PC-3 (cell line): ENCODE measurements at regions of chr2 and their contacts with region 1.

Region 1: DNA sequence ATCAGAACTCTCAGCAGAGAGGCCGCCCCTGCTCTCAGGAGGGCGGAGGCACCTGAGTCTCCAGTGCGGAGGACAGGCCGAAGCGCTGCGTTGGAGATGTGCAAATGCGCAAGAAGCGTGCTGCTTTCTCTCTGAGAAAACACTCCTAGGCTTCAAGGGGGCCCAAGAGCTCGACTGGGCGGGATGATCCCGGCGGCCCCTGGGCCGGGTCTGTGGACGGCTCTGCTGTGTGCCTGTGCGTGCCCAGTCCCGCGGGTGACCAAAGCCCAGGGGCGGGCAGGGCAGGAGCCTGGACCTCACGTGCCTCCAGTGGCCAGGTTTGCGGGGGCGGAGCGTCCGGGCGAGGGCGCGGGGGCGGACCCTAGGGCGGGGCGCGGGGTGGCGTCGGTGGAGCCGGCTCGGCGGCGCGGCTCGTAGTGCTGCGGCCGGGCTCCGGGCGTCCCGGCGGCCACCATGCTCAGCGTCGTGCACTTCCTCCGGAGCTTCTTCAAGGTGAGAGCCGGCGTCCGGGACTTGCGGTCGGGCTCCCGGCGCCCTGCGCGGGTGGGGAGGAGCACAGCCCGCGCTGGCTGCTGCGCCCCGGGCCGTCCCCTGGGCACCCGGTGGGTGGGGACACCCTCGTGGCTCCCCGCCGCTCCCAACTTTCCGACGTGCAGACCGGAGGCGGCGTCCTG is at the start of gene ARHGEF4:
- DNase-seq: peak; percentile 66
- ATAC-seq: peak; percentile 88
- H3K4me3 ChIP-seq: peak within 1 kb of the TSS; percentile 89
- H3K27ac ChIP-seq: peak within 1 kb of the TSS; percentile 41
- H3K4me1 ChIP-seq: peaks cover 16% of the 10 kb centered on the region
- H3K27me3 ChIP-seq: no peaks in the 10 kb centered on the region
- CTCF ChIP-seq: no peak
- total RNA-seq, gene ARHGEF4: 21.5 and 30.5 TPM in 2 replicates

Region 2: DNA sequence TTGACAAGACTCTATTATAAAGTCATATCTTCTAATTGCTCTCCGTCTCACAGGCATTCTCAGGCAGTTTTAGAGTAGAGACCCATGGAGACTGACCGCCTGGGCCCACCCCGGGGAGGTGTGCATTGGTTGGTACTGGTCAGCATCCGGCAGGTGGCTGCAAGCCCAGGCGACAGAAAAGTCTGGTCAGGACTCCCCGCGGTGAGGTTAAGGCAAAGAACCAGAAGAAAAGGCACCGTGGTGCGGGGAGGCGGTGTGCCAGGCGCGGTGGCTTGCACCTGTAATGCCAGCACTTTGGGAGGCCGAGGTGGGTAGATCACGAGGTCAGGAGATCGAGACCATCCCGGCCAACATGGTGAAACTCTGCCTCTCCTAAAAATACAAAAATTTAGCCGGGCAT is 48.8 kb before region 1 on chr2:
- CTCF ChIA-PET with region 1: no interaction called
- POLR2A ChIA-PET with region 1: no interaction called
- intact Hi-C with region 1: no loop called
- DNase-seq: no peak
- ATAC-seq: no peak
- H3K4me3 ChIP-seq: no peak overlapping the region
- H3K27ac ChIP-seq: no peak overlapping the region
- H3K4me1 ChIP-seq: no peaks in the 10 kb centered on the region
- H3K27me3 ChIP-seq: peaks cover 26% of the 10 kb centered on the region
- CTCF ChIP-seq: no peak

Region 3: GRCh38 chr2:130807659-130808385 is 28.8 kb before region 1 on chr2:
- CTCF ChIA-PET with region 1: interaction called, 4 read pairs
- POLR2A ChIA-PET with region 1: no interaction called
- intact Hi-C with region 1: loop called (anchors 2 kb)
- DNase-seq: peak; percentile 76
- ATAC-seq: peak; percentile 96
- H3K4me3 ChIP-seq: no peak overlapping the region
- H3K27ac ChIP-seq: peak overlapping the region; percentile 90
- H3K4me1 ChIP-seq: peaks cover 24% of the 10 kb centered on the region
- H3K27me3 ChIP-seq: no peaks in the 10 kb centered on the region
- CTCF ChIP-seq: no peak

Region 4: GRCh38 chr2:130899306-130899705 is 62.7 kb after region 1 on chr2:
- CTCF ChIA-PET with region 1: no interaction called
- POLR2A ChIA-PET with region 1: no interaction called
- intact Hi-C with region 1: no loop called
- DNase-seq: no peak
- ATAC-seq: no peak
- H3K4me3 ChIP-seq: no peak overlapping the region
- H3K27ac ChIP-seq: no peak overlapping the region
- H3K4me1 ChIP-seq: peaks cover 8% of the 10 kb centered on the region
- H3K27me3 ChIP-seq: no peaks in the 10 kb centered on the region
- CTCF ChIP-seq: no peak

Region 5: DNA sequence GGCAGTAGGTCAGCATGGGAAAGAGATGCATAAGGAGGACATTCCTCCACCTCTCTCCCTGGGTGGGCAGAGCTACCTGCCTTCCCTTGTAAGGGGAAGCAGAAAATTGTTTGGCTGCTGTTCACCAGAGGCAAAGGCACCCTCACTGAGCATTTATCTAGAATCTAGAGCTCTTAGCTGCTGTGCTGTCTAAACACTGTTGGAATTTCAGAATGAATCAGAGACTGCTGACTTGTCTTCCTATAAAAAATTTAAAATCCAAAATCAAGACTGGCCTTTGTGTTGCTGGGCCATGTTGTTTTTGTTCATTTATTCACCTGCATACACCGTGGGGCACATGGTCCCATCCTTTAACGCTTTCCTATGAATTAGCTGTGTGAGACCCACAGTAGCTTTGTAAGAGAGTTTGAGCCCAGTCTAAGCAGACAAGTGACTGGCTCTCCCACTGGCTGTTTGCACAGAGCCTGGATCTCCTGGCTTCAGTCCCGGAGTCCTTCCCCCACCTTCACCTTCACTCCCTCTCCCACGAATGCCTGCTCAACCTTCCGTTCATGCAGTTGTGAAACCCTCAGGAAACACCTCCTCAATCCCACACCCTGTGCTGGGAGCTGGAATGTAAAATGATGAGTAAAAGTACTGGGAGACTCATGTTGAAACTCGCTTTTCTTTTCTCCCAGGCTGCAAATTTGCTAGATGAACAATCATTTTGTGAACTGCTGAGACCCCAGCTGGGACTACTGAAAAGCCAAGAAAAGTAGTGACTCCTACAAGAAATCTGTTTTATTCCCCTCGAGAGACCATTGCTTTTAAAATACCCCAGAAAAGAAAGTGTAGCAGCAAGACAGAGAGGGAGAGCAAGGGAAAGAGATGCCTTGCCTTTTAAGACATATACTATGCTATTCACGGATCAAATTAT is 180.4 kb after region 1 on chr2:
- CTCF ChIA-PET with region 1: no interaction called
- POLR2A ChIA-PET with region 1: no interaction called
- intact Hi-C with region 1: no loop called
- DNase-seq: peak; percentile 92
- ATAC-seq: peak; percentile 89
- H3K4me3 ChIP-seq: peak overlapping the region; percentile 50
- H3K27ac ChIP-seq: peak overlapping the region; percentile 78
- H3K4me1 ChIP-seq: peaks cover 28% of the 10 kb centered on the region
- H3K27me3 ChIP-seq: no peaks in the 10 kb centered on the region
- CTCF ChIP-seq: no peak

Region 6: GRCh38 chr2:131125195-131125757 is 288.6 kb after region 1 on chr2:
- CTCF ChIA-PET with region 1: no interaction called
- POLR2A ChIA-PET with region 1: no interaction called
- intact Hi-C with region 1: no loop called
- DNase-seq: no peak
- ATAC-seq: no peak
- H3K4me3 ChIP-seq: no peak overlapping the region
- H3K27ac ChIP-seq: no peak overlapping the region
- H3K4me1 ChIP-seq: peaks cover 7% of the 10 kb centered on the region
- H3K27me3 ChIP-seq: no peaks in the 10 kb centered on the region
- CTCF ChIP-seq: no peak